Heart left ventricle (tissue), 16 donors: ENCODE measurements at regions of chr19 and their contacts with region 1.

Region 1: DNA sequence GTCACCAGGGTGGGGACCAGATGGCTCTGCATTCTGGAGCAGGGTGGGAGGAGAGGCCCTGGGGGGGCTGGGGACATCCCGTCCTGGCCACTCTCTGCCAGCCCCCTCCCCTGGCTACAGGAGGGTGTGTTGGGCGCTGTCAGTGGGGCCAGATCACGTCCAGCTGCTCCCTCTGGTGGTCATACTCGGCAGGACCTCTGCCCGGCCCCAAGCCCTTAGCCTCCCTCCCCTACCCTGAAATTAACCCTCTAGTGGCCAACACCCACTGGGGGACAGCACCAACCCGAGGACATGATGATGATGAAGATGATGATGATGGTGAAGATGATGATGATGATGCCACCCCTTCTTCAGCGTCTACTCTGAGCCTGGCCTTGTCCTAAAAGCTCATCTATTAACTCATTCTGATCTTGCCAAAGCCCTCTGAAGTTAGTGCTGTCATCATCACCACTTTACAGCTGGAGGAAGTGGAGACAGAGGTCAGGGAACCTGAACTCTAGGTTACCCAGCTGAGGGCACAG is 590 bp upstream of the LGI4 start:
- DNase-seq: peak; percentile 78 to 87 (median 82)
- ATAC-seq: peak; percentile 32 to 56 (median 54)
- H3K4me3 ChIP-seq: peak overlapping the region in 9 of 12 donors; percentile 28 to 53 (median 43)
- H3K27ac ChIP-seq: peak overlapping the region in 10 of 12 donors; percentile 54 to 76 (median 68)
- H3K4me1 ChIP-seq: peaks cover 0 to 50% (median 27%) of the 10 kb centered on the region in 12 donors
- H3K27me3 ChIP-seq: peaks cover 0 to 8% (median 0%) of the 10 kb centered on the region in 9 donors
- CTCF ChIP-seq: peak; percentile 86 to 97 (median 90)
- POLR2A ChIP-seq: no peak

Region 2: DNA sequence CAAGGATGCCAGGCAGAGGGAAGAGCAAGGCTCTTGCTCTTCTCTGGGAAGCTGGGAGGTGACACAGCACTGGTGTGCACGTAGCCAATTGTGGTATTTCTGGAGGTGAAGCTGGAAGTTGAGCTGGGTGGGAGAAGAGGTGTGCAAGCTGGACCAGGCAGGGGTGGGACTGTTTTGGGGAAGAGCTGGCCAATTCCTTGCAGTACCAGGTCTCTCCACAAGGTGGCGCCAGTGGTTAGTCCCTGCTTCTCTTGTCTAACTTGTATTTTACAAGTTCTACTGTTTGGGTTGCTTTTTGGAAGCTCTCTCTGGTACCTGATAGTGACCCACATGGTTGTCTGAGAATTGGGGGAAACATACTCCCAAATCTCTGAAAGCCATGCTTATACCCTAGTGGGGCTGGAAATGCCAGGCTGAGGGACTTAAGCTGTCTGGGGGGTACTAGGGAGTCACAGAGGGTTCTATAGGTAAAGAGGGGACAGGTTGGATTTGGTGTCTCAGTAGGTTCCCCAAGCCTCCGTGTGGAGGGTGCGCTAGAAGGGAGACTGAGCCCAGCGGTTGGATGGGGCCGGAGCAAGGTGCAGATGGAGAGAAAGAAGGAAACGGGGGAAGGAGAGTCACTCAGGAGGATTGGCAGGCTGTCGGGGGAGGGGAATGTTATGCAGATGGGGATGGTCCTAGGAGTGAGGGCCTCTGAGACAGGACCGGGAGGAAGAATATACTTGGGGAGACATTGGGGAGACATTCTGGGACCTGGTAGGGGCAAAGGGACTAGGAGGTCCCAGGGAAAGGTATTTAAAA is 90.9 kb before region 1 on chr19:
- intact Hi-C with region 1: loop called in 2 of 10 experiments (anchors 5 to 10 kb)
- DNase-seq: peak in 3 of 5 donors; percentile 49 to 55 (median 54)
- ATAC-seq: no peak
- H3K4me3 ChIP-seq: no peak overlapping the region
- H3K27ac ChIP-seq: no peak overlapping the region
- H3K4me1 ChIP-seq: peaks cover 0 to 47% (median 29%) of the 10 kb centered on the region in 12 donors
- H3K27me3 ChIP-seq: no peaks in the 10 kb centered on the region
- CTCF ChIP-seq: peak; percentile 90 to 99 (median 96)
- POLR2A ChIP-seq: no peak

Region 3: GRCh38 chr19:35066691-35067563 is 68.5 kb before region 1 on chr19:
- intact Hi-C with region 1: loop called in 9 of 10 experiments (anchors 1 to 10 kb)
- DNase-seq: peak; percentile 75 to 91 (median 83)
- ATAC-seq: peak; percentile 77 to 91 (median 86)
- H3K4me3 ChIP-seq: no peak overlapping the region
- H3K27ac ChIP-seq: no peak overlapping the region
- H3K4me1 ChIP-seq: peaks cover 0 to 5% (median 0%) of the 10 kb centered on the region in 12 donors
- H3K27me3 ChIP-seq: no peaks in the 10 kb centered on the region
- CTCF ChIP-seq: peak; percentile 75 to 92 (median 84)
- POLR2A ChIP-seq: no peak

Region 4: DNA sequence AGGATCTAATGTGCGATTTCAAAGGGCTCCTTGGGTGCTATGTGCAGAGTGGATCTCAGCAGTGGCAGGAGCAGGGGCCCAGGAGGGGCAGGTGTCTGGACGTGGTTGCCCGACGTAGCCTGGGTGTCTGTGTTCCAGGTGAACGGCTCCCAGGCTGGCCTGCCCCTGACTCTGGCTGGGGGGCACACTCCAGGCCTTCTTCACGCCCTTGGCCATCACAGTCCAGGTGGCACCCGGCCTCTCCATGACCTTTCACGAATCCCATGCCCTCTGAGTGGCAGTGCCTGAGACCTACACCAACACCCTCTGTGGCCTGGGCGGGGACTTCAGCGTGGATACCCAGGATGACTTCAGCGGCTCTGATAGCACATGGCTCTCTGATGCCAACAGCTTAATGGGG is 31.1 kb before region 1 on chr19:
- intact Hi-C with region 1: no loop called
- DNase-seq: peak in 1 of 5 donors; percentile 49
- ATAC-seq: no peak
- H3K4me3 ChIP-seq: no peak overlapping the region
- H3K27ac ChIP-seq: no peak overlapping the region
- H3K4me1 ChIP-seq: no peaks in the 10 kb centered on the region
- H3K27me3 ChIP-seq: no peaks in the 10 kb centered on the region
- CTCF ChIP-seq: no peak
- POLR2A ChIP-seq: no peak

Region 5: GRCh38 chr19:35114353-35115176 is 20.9 kb before region 1 on chr19:
- intact Hi-C with region 1: loop called in 7 of 10 experiments (anchors 1 to 2 kb)
- DNase-seq: peak in 4 of 5 donors; percentile 52 to 82 (median 66)
- ATAC-seq: peak; percentile 74 to 87 (median 76)
- H3K4me3 ChIP-seq: peak overlapping the region in 11 of 12 donors; percentile 9 to 52 (median 40)
- H3K27ac ChIP-seq: peak overlapping the region in 3 of 12 donors; percentile 3 to 39 (median 19)
- H3K4me1 ChIP-seq: peaks cover 0 to 21% (median 7%) of the 10 kb centered on the region in 12 donors
- H3K27me3 ChIP-seq: peaks cover 0 to 2% (median 0%) of the 10 kb centered on the region in 9 donors
- CTCF ChIP-seq: peak; percentile 93 to 99 (median 97)
- POLR2A ChIP-seq: no peak

Region 6: GRCh38 chr19:35295792-35296462 is 160.5 kb after region 1 on chr19:
- intact Hi-C with region 1: no loop called
- DNase-seq: no peak
- ATAC-seq: no peak
- H3K4me3 ChIP-seq: no peak overlapping the region
- H3K27ac ChIP-seq: no peak overlapping the region
- H3K4me1 ChIP-seq: peaks cover 0 to 5% (median 0%) of the 10 kb centered on the region in 12 donors
- H3K27me3 ChIP-seq: peaks cover 0 to 54% (median 21%) of the 10 kb centered on the region in 9 donors
- CTCF ChIP-seq: no peak
- POLR2A ChIP-seq: no peak